Mammary epithelial cell (primary cell): ENCODE measurements at regions of chr10 and their contacts with region 1.

Region 1: DNA sequence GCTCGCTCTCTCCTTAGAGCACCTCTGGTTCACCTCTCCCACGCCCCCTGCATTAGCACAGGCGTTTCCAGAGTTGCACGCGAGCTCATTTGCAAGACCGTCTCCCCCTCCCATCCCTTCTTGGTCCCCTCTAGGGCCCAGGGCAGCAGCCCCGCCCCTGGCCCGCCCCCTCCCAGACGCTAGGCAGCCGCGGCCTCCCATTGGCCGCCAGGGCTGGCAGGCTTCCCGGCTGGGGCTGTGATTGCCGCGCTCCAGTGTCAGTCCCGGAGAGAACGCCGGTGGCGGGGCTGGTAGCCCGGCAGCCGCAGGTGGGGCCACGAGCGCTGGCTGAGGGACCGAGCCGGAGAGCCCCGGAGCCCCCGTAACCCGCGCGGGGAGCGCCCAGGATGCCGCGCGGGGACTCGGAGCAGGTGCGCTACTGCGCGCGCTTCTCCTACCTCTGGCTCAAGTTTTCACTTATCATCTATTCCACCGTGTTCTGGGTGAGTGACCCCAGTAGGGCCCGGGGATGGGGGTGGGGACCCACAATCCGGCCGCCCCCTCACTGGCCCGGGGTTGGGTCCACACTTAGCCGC is at the start of gene TSPAN15:
- DNase-seq: peak; percentile 77
- H3K4me3 ChIP-seq: peak within 1 kb of the TSS; percentile 48 to 54 (median 50)
- H3K27ac ChIP-seq: no peak within 1 kb of the TSS
- H3K4me1 ChIP-seq: peaks cover 16% of the 10 kb centered on the region
- H3K27me3 ChIP-seq: no peaks in the 10 kb centered on the region
- CTCF ChIP-seq: no peak
- total RNA-seq, gene TSPAN15: 0.64 to 1.5 TPM

Region 2: GRCh38 chr10:69327463-69328379 is 123.6 kb before region 1 on chr10:
- CTCF ChIA-PET with region 1: interaction called, 20 read pairs
- dilution Hi-C with region 1: no loop called
- in situ Hi-C with region 1: no loop called
- intact Hi-C with region 1: no loop called
- DNase-seq: peak; percentile 62
- H3K4me3 ChIP-seq: peak overlapping the region in 2 of 3 experiments; percentile 5 to 26
- H3K27ac ChIP-seq: peak overlapping the region; percentile 48
- H3K4me1 ChIP-seq: peaks cover 40% of the 10 kb centered on the region
- H3K27me3 ChIP-seq: no peaks in the 10 kb centered on the region
- CTCF ChIP-seq: no peak

Region 3: DNA sequence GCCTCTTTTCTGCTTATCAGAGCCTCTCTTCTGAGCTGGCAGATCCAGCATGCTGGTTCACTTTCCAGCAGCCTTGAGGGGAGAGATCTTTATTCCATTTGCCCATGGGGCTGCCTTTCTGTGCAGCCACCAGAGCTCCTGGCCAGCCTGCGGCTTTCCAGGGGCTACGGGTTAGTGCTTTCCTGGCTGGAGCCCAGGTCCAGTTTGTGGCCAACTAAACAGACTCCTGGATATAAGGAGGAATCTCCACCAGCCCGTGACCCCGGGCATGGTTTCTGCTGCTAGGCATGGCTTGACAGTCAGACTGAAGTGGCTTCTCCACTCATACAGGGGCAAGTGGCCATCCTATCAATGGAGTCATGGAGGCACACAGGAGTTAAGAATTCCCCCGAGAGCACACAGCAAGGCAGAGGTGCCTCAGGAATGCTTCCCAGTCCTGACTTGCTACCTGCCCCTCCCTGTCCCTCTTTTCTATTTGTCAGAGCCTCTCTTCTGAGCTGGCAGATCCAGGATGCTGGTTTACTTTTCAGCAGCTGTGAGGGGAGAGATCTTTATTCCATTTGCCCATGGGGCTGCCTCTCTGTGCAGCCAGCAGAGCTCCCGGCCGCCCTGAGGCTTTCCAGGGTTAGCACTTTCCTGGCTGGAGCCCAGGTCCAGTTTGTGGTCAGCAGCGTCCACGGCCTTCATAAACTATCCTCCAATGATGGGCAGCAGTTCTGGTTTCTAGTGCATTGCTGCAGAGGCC is 35.8 kb after region 1 on chr10:
- CTCF ChIA-PET with region 1: no interaction called
- dilution Hi-C with region 1: no loop called
- in situ Hi-C with region 1: no loop called
- intact Hi-C with region 1: loop called (anchors 5 kb)
- DNase-seq: peak; percentile 79
- H3K4me3 ChIP-seq: no peak overlapping the region
- H3K27ac ChIP-seq: no peak overlapping the region
- H3K4me1 ChIP-seq: peaks cover 13% of the 10 kb centered on the region
- H3K27me3 ChIP-seq: no peaks in the 10 kb centered on the region
- CTCF ChIP-seq: no peak

Region 4: DNA sequence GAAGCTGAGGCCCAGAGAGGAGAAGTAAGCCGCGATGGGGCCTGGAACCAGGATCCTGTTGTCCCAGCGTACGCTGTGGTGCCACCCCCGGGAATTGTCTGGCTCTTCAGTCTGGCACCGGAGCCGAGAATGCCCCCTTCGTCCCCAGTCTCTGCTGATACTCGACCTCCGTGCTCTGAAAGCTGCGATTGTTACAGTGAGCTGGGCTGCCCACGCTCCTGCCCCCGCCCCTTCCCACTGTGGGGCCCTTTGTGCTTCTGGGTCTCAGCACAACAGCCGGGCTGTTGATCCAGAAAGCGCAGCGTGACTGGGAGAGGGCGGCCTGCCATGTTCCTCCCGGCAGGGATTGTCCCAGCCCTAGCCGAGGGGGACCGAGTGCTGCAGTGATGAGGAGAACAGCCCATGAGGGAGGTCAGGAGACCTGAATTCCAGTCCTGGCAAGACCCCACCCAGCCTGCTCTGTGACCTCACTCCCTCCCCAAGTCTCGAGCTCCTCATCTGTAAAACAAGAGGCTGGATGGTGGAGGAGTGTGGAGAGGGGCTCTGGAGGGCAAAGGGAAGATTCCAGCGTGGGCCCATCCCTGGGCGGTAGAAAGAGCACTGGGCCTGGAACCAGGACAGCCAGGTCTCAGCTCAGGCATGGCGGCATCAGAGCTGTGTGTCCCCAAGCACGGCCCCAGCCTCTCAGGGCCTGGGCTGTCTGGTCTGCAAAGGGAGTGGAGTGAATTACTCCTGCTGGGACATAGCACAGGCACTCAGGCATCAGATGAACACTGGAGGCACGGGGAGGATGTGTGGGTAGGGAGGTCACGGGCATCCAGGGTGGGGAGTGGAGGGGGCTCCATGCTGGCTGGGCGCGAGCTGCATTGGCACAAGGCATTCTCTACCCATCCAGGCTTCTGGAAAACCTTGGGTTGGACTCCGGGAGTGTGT is 43.6 kb after region 1 on chr10:
- CTCF ChIA-PET with region 1: no interaction called
- dilution Hi-C with region 1: loop called (anchors 5 kb)
- in situ Hi-C with region 1: no loop called
- intact Hi-C with region 1: no loop called
- DNase-seq: no peak
- H3K4me3 ChIP-seq: no peak overlapping the region
- H3K27ac ChIP-seq: no peak overlapping the region
- H3K4me1 ChIP-seq: no peaks in the 10 kb centered on the region
- H3K27me3 ChIP-seq: no peaks in the 10 kb centered on the region
- CTCF ChIP-seq: no peak

Region 5: DNA sequence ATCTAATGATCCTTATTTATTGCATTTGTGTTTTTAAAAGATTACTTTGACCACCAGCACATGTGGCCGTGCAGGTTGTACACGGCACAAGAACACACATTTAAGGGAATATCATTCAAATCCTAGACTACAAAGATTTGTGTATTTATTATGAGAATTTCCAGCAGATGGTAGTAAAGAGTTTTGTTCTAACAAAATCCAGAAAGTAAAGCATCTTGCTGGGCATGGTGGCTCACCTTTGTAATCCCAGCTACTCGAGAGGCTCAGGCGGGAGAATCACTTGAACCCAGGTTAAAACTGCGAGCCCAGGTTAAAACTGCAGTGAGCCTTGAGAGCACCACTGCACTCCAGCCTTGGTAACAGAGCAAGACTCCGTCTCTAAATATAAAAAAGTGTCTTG is 632.9 kb after region 1 on chr10:
- CTCF ChIA-PET with region 1: interaction called, 14 read pairs
- dilution Hi-C with region 1: no loop called
- in situ Hi-C with region 1: no loop called
- intact Hi-C with region 1: no loop called
- DNase-seq: no peak
- H3K4me3 ChIP-seq: no peak overlapping the region
- H3K27ac ChIP-seq: no peak overlapping the region
- H3K4me1 ChIP-seq: no peaks in the 10 kb centered on the region
- H3K27me3 ChIP-seq: no peaks in the 10 kb centered on the region
- CTCF ChIP-seq: no peak